Activated CD4-positive, alpha-beta memory T cell treated with anti-CD3 and anti-CD28 coated beads for 36 hours (primary cell): ENCODE measurements at regions of chr19 and their contacts with region 1.

Region 1: DNA sequence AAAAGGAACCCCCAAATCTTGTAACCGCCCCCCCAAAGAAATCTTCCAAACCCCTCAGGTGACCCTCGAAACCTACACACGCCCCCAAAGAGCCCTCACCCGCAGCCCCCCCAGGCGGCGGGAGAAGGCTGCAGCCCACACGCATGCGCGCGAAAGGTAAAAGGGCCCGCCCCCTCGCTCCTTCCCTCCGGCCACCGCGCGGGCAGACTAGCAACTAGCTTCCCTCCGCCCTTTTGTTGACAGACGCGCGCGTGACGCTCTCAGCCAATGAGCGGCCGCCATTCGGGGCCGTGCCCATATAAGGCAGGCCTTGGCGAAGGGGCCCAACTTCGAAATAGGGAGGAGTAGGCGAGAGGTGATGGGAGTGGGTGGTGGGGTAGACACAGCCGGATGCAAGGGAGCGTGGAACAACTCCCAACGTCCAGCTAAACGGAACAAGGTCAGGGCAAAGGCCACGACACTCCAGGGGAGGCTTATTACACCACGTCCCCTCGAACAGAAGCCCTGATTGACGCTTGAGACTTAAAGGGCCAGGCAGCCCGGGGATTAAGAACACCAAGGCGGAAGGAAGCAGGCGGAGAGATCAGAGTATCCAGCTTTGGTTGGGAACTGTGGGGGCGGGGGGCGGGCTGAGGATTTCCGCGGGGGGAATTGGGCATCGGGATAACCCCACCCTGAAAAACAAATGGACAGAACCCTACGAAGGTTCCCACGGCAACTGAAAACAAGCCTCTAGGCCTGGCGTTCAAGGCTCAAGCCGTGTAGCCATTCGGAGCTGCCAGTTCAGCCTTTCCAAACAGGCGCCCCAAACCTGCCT is 13.3 kb downstream of the FBXO46 start:
- DNase-seq: peak; percentile 99
- H3K4me3 Mint-ChIP-seq: peak overlapping the region; percentile 96
- H3K27ac Mint-ChIP-seq: peak overlapping the region; percentile 93
- H3K4me1 Mint-ChIP-seq: peaks cover 39% of the 10 kb centered on the region
- H3K27me3 Mint-ChIP-seq: no peaks in the 10 kb centered on the region

Region 2: GRCh38 chr19:45584332-45585157 is 132.8 kb before region 1 on chr19 and contains the start of gene OPA3:
- CTCF ChIA-PET with region 1: no interaction called
- POLR2A ChIA-PET with region 1: no interaction called
- intact Hi-C with region 1: loop called (anchors 1 kb)
- DNase-seq: peak; percentile 100
- H3K4me3 Mint-ChIP-seq: peak within 1 kb of the TSS; percentile 96
- H3K27ac Mint-ChIP-seq: peak within 1 kb of the TSS; percentile 97
- H3K4me1 Mint-ChIP-seq: peaks cover 11% of the 10 kb centered on the region
- H3K27me3 Mint-ChIP-seq: peaks cover 1% of the 10 kb centered on the region
- total RNA-seq, gene OPA3: 10.8 to 11.0 TPM

Region 3: DNA sequence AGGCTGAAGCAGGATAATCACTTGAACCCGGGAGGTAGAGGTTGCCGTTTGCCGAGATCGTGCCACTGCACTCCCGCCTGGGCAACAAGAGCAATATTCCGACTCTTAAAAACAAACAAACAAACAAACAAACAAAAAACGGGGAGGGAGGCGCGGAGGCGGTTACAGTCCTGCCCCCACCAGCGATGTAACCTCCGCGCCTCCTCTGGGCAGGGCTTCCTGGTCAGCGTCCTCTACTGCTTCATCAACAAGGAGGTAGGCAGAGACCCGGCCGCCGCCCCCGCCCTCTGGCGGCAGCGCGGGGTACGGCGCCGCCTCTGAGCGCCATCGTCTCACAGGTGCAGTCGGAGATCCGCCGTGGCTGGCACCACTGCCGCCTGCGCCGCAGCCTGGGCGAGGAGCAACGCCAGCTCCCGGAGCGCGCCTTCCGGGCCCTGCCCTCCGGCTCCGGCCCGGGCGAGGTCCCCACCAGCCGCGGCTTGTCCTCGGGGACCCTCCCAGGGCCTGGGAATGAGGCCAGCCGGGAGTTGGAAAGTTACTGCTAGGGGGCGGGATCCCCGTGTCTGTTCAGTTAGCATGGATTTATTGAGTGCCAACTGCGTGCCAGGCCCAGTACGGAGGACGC is 35.9 kb before region 1 on chr19:
- CTCF ChIA-PET with region 1: interaction called, 10 read pairs
- POLR2A ChIA-PET with region 1: interaction called, 3 read pairs
- intact Hi-C with region 1: loop called (anchors 5 kb)
- DNase-seq: peak; percentile 93
- H3K4me3 Mint-ChIP-seq: peak overlapping the region; percentile 73
- H3K27ac Mint-ChIP-seq: no peak overlapping the region
- H3K4me1 Mint-ChIP-seq: peaks cover 19% of the 10 kb centered on the region
- H3K27me3 Mint-ChIP-seq: no peaks in the 10 kb centered on the region

Region 4: DNA sequence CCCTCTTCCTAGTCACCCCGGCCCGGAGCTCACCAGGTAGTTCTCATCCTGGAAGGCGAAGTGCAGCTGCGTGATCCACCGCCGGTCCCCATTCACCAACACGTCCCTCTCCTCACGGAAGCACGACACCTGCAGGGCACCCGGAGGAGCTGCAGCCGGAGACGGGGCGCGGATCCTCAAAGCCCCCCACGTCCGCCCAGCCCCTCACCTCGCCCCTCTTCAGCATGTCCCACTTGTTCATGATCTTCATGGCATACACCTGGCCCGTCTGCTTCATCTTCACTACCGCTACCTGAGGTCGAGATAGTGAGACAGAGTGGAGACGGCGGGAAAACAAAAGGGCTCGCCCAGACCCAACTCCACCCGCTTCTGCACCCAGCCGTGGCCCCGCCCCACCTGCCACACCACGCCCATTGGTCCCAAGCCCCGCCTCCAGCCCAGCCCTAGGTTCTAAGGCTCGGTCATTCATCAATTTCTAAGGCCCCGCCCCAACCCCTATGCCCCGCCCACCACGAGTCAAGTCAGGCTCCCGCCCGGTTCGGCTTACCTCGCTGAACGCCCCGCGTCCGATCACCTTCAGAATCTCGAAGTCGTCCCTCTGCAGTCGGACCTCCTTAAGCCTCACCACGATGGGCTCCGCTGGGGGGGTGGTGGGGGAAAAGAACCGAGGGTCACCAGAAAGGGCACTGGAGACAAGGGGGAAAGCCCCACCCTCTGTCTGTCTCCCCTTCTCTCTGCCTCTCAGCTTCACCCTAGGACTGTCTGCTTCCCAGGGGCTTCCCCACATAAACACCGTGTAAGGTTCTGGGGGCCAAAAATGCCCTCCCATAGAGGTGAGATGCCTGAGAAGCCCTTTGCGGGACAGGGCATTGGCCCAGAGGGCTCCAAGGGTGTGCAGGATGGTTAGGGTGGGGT is 62.1 kb after region 1 on chr19:
- CTCF ChIA-PET with region 1: interaction called, 10 read pairs
- POLR2A ChIA-PET with region 1: no interaction called
- intact Hi-C with region 1: no loop called
- DNase-seq: peak; percentile 96
- H3K4me3 Mint-ChIP-seq: peak overlapping the region; percentile 67
- H3K27ac Mint-ChIP-seq: no peak overlapping the region
- H3K4me1 Mint-ChIP-seq: peaks cover 15% of the 10 kb centered on the region
- H3K27me3 Mint-ChIP-seq: peaks cover 15% of the 10 kb centered on the region

Region 5: GRCh38 chr19:45886427-45887199 is 169.2 kb after region 1 on chr19:
- CTCF ChIA-PET with region 1: no interaction called
- POLR2A ChIA-PET with region 1: no interaction called
- intact Hi-C with region 1: loop called (anchors 1 kb)
- DNase-seq: peak; percentile 95
- H3K4me3 Mint-ChIP-seq: peak overlapping the region; percentile 85
- H3K27ac Mint-ChIP-seq: peak overlapping the region; percentile 92
- H3K4me1 Mint-ChIP-seq: peaks cover 22% of the 10 kb centered on the region
- H3K27me3 Mint-ChIP-seq: no peaks in the 10 kb centered on the region

Region 6: DNA sequence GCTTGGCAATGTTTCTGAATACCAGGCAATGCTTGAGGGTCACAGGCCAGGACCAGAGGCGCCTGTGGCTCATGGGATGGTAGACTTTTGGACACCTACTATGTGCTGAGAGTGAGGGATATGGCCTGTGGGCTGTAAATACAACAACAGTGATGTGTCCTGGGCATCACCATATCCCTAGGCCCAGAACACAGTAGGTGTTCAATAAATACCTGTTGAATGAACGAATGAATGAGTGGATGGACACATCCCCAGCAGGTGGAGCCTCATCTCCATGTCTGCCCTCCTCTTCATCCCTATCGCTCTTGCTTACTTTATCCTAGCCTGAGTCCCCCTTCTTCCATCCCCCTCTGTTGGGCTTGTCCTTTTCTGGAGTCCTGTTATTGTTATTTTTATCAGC is 213.7 kb after region 1 on chr19:
- CTCF ChIA-PET with region 1: no interaction called
- POLR2A ChIA-PET with region 1: no interaction called
- intact Hi-C with region 1: no loop called
- DNase-seq: no peak
- H3K4me3 Mint-ChIP-seq: no peak overlapping the region
- H3K27ac Mint-ChIP-seq: no peak overlapping the region
- H3K4me1 Mint-ChIP-seq: peaks cover 10% of the 10 kb centered on the region
- H3K27me3 Mint-ChIP-seq: peaks cover 27% of the 10 kb centered on the region